Left colon (tissue), 2 donors: ENCODE measurements at regions of chr22 and their contacts with region 1.

Region 1: DNA sequence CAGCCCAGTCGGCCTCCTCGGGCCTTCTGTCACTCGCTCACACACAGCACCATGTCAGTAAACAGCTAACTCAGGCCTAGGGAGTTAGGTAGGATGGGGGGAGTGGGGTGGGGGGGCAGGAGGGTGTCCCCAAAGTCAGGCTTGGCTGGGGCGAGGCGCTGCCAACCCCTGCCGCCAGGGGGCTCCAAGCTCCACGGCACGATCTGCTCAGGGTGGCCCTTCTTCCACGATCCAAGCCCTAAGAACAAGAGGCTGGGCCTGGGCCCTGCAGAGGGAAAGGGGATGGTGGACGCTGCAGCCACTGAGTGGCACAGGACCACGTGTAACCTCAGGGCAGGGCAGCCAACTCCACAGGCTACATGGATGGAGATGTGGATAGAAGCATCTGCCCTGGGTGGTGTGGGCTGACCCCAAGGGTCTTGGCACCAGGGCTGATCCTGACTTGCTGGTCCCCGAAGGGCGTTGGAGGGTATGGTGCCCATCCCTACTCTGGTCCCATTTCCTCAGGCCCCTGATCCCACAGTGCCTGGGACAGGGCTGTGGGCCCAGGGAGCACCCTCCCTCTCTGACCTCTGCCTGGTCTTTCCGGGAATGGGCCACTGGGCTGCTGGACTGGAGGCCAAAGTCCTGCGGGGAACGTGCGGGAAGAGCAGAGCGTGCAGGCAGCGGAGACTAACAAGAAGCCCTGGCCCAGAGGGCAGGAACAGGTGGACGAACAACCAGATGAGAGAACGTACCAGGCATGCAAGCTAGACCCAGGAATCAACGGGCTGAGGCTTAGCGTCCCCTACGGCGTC is 29.1 kb upstream of the TXNRD2 start:
- DNase-seq: peak in 1 of 2 donors; percentile 75
- ATAC-seq: peak; percentile 69

Region 2: GRCh38 chr22:19800761-19801244 is 169.9 kb before region 1 on chr22:
- intact Hi-C with region 1: no loop called
- DNase-seq: no peak
- ATAC-seq: no peak

Region 3: GRCh38 chr22:20008221-20008995 is 37.7 kb after region 1 on chr22:
- intact Hi-C with region 1: loop called (anchors 5 to 10 kb)
- DNase-seq: no peak
- ATAC-seq: no peak

Region 4: DNA sequence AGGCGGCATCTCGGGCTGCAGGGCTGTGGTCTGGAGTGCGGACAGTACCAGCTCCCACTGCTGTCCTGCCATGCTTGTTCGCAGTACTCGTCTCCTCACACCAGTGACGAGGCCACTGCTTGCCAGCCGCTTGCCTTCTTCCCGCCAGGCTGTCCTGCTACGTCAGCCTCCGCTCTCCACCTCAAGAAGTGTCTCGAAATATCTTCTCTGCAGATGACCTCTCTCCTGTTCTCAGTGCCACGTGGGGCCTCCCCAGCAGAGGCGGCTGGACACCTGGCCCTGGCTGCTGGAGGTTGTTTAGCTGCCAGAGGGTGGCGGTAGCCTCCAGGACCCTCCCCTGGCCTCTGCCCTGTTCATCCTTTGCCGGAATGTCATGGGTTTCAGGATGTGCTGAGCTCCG is 183.3 kb after region 1 on chr22:
- intact Hi-C with region 1: no loop called
- DNase-seq: no peak
- ATAC-seq: no peak